Psoas muscle (tissue), 8 donors: ENCODE measurements at regions of chr10 and their contacts with region 1.

Region 1: GRCh38 chr10:6202684-6203330 is at the start of gene PFKFB3:
- DNase-seq: peak; percentile 97 to 98
- ATAC-seq: peak; percentile 78 to 89 (median 82)
- H3K4me3 ChIP-seq: peak within 1 kb of the TSS; percentile 92
- H3K27ac ChIP-seq: peak within 1 kb of the TSS; percentile 92
- H3K4me1 ChIP-seq: peaks cover 42% of the 10 kb centered on the region
- H3K27me3 ChIP-seq: no peaks in the 10 kb centered on the region
- CTCF ChIP-seq: peak; percentile 99
- total RNA-seq, gene PFKFB3: 25.4 to 225 (median 148) TPM

Region 2: GRCh38 chr10:6108603-6109443 is 94.0 kb before region 1 on chr10:
- intact Hi-C with region 1: loop called (anchors 5 kb)
- DNase-seq: no peak
- ATAC-seq: peak; percentile 39 to 61 (median 57)
- H3K4me3 ChIP-seq: no peak overlapping the region
- H3K27ac ChIP-seq: peak overlapping the region; percentile 12
- H3K4me1 ChIP-seq: peaks cover 16% of the 10 kb centered on the region
- H3K27me3 ChIP-seq: no peaks in the 10 kb centered on the region
- CTCF ChIP-seq: peak; percentile 82

Region 3: DNA sequence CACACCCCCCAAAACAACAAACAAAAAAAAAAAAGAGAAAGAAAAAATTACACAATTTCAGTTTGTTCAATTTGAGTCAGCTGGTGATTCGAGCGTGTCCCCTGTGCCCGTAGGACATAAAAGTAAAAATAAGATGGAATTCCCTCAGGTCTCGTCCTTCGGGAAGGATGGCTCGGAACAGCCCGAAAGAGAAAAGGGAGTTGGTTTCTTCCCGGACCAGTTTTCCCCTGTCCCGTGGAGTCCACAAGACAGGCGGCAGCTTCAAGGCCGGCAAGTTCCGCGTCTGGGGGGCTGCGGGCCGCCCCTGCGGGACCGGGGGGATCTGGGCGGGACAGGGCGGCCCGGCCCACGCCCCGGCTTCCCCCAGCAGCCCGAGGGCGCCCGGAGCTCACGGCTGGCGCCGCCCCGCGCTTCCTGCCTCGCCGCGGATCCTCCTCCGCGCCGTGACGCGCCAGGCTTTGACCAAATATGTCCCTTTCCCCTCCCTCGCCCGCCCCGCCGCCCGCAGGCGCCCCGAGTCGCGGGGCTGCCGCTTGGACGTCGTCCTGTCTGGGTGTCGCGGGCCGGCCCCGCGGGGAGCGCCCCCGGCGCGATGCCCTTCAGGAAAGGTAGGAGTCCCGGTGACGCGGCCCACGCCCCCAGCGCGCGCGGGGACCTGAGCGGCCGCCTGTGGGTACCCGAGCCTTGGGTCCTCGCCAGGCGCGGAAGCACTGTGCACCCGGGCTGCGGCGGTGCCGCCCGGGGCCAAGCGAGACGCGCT is 58.2 kb before region 1 on chr10:
- intact Hi-C with region 1: loop called in 1 of 2 experiments (anchors 2 kb)
- DNase-seq: peak; percentile 92 to 94
- ATAC-seq: peak; percentile 70 to 78 (median 76)
- H3K4me3 ChIP-seq: peak overlapping the region; percentile 99
- H3K27ac ChIP-seq: peak overlapping the region; percentile 96
- H3K4me1 ChIP-seq: peaks cover 49% of the 10 kb centered on the region
- H3K27me3 ChIP-seq: no peaks in the 10 kb centered on the region
- CTCF ChIP-seq: no peak

Region 4: DNA sequence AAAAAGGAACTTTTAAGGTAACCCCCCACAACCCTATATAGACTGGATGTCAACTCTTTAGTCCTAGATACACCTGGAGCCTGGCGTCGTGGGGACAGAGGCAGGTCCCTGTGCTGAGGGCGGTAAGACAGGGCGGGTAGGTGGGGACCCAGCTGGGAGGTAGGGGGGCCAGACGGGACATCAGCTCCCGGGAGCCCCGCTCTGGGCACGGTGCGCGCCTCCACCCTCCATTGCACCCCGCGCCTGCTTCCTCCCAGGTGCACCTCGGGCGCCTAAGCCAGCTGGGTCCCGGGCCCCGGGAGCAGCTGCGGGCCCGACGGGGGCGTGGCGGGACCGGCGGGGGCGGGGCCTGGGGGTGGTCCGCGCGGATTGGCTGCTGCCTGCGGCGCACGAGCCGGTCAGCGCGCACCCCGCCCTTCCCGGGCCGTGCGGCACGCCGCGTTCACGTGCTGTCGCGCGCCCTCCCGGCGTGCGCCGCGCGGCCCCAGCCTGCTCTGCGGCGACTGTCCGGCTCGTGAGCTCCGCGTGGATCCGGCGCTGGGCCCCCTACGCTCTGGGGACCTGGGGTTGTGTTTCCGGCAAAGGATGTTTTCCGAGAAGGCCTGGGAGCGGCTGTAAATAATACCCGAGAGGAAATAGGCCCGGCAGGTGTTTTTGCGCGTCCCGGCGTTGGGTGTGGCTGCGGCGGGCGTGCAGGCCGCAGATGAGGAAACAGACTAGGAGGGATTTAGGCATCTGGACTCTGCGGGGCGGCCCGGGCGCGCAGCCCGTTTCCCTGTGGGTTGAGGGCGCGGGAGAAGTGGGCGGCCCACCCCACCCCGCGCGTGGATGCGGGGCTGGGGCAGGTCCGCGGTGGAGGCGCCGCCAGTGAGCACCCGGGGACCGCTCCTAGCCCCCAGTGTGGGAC is 39.2 kb before region 1 on chr10:
- intact Hi-C with region 1: loop called (anchors 5 kb)
- DNase-seq: peak; percentile 94 to 97
- ATAC-seq: peak; percentile 90 to 98 (median 94)
- H3K4me3 ChIP-seq: peak overlapping the region; percentile 73
- H3K27ac ChIP-seq: peak overlapping the region; percentile 92
- H3K4me1 ChIP-seq: peaks cover 37% of the 10 kb centered on the region
- H3K27me3 ChIP-seq: no peaks in the 10 kb centered on the region
- CTCF ChIP-seq: no peak

Region 5: GRCh38 chr10:6174201-6174874 is 28.5 kb before region 1 on chr10:
- intact Hi-C with region 1: loop called (anchors 2 to 5 kb)
- DNase-seq: peak; percentile 68 to 92
- ATAC-seq: peak; percentile 59 to 75 (median 70)
- H3K4me3 ChIP-seq: peak overlapping the region; percentile 0
- H3K27ac ChIP-seq: peak overlapping the region; percentile 92
- H3K4me1 ChIP-seq: peaks cover 87% of the 10 kb centered on the region
- H3K27me3 ChIP-seq: no peaks in the 10 kb centered on the region
- CTCF ChIP-seq: no peak

Region 6: GRCh38 chr10:6401562-6402348 is 198.9 kb after region 1 on chr10:
- intact Hi-C with region 1: loop called in 1 of 2 experiments (anchors 5 kb)
- DNase-seq: peak; percentile 60 to 80
- ATAC-seq: peak; percentile 94 to 96 (median 94)
- H3K4me3 ChIP-seq: peak overlapping the region; percentile 63
- H3K27ac ChIP-seq: peak overlapping the region; percentile 75
- H3K4me1 ChIP-seq: peaks cover 28% of the 10 kb centered on the region
- H3K27me3 ChIP-seq: no peaks in the 10 kb centered on the region
- CTCF ChIP-seq: peak; percentile 75

Region 7: DNA sequence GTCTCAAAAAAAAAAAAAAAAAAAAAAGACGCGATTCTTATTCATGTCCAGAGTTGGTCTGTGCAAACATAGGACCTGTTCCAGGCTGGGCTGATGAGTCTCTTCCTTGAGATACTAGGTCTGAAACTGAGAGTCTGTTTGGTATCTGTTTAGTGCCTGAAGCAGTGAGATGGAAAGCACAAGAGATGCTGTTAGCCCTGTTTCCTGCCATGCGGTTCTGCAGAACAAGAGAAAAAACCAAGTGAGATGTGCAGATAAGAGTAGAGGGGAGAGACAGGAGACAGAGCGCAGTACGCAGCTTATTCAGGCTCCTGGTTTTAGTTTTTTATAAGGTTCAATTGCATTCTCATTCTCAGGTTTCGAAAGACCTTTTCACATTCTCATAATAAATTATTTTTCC is 463.0 kb after region 1 on chr10:
- intact Hi-C with region 1: no loop called
- DNase-seq: no peak
- ATAC-seq: no peak
- H3K4me3 ChIP-seq: no peak overlapping the region
- H3K27ac ChIP-seq: no peak overlapping the region
- H3K4me1 ChIP-seq: peaks cover 3% of the 10 kb centered on the region
- H3K27me3 ChIP-seq: no peaks in the 10 kb centered on the region
- CTCF ChIP-seq: no peak